Activated CD8-positive, alpha-beta T cell treated with anti-CD3 and anti-CD28 coated beads for 36 hours (primary cell): ENCODE measurements at regions of chr2 and their contacts with region 1.

Region 1: DNA sequence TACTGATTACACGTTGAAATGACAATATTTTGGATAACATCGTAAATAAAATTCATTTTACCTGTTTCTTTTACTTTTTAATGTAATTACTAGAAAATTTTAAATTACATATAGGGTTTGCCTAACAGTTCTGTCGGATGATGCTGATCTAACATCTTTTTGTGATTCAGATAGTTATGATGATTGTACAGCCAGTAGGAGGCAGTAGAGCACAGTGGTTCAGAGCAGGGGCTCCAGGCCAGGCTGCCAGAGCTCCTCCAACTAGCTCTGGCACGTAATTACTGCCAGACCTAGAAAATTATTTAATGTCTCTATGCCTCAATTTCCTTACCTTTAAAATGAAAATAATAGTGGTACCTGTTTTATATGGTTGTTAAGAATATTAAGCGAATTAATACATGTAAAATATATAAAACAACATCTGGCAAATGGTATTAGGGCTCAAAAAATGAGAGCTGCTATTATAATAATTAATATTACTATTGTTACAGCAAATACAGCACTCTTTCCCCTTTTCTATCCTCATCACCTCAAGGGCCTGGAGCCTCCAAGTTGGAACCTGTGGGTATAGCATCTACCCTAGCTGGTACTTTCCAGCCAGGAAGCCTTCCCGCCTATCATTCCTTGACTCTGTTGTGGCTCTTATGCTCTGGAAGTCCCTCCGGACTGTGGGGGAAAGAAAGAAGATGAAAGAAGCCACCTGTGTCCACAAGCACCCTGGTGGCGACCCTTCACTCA is 47.7 kb upstream of the PLA2R1 start:
- DNase-seq: peak; percentile 63
- ATAC-seq: peak; percentile 76
- H3K4me3 Mint-ChIP-seq: no peak overlapping the region
- H3K27ac Mint-ChIP-seq: no peak overlapping the region
- H3K4me1 Mint-ChIP-seq: no peaks in the 10 kb centered on the region
- H3K27me3 Mint-ChIP-seq: peaks cover 12% of the 10 kb centered on the region
- CTCF ChIP-seq: peak; percentile 87

Region 2: GRCh38 chr2:160091381-160091780 is 18.7 kb before region 1 on chr2:
- CTCF ChIA-PET with region 1: interaction called, 15 read pairs
- POLR2A ChIA-PET with region 1: no interaction called
- intact Hi-C with region 1: no loop called
- DNase-seq: no peak
- ATAC-seq: no peak
- H3K4me3 Mint-ChIP-seq: no peak overlapping the region
- H3K27ac Mint-ChIP-seq: no peak overlapping the region
- H3K4me1 Mint-ChIP-seq: peaks cover 2% of the 10 kb centered on the region
- H3K27me3 Mint-ChIP-seq: peaks cover 5% of the 10 kb centered on the region
- CTCF ChIP-seq: no peak

Region 3: GRCh38 chr2:160096409-160096808 is 13.7 kb before region 1 on chr2:
- CTCF ChIA-PET with region 1: interaction called, 15 read pairs
- POLR2A ChIA-PET with region 1: no interaction called
- intact Hi-C with region 1: no loop called
- DNase-seq: peak; percentile 58
- ATAC-seq: peak; percentile 78
- H3K4me3 Mint-ChIP-seq: no peak overlapping the region
- H3K27ac Mint-ChIP-seq: no peak overlapping the region
- H3K4me1 Mint-ChIP-seq: peaks cover 4% of the 10 kb centered on the region
- H3K27me3 Mint-ChIP-seq: peaks cover 5% of the 10 kb centered on the region
- CTCF ChIP-seq: no peak

Region 4: GRCh38 chr2:160210599-160211138 is 100.6 kb after region 1 on chr2:
- CTCF ChIA-PET with region 1: interaction called, 28 read pairs
- POLR2A ChIA-PET with region 1: no interaction called
- intact Hi-C with region 1: loop called (anchors 2 kb)
- DNase-seq: peak; percentile 82
- ATAC-seq: peak; percentile 86
- H3K4me3 Mint-ChIP-seq: no peak overlapping the region
- H3K27ac Mint-ChIP-seq: no peak overlapping the region
- H3K4me1 Mint-ChIP-seq: peaks cover 32% of the 10 kb centered on the region
- H3K27me3 Mint-ChIP-seq: peaks cover 5% of the 10 kb centered on the region
- CTCF ChIP-seq: peak; percentile 90

Region 5: DNA sequence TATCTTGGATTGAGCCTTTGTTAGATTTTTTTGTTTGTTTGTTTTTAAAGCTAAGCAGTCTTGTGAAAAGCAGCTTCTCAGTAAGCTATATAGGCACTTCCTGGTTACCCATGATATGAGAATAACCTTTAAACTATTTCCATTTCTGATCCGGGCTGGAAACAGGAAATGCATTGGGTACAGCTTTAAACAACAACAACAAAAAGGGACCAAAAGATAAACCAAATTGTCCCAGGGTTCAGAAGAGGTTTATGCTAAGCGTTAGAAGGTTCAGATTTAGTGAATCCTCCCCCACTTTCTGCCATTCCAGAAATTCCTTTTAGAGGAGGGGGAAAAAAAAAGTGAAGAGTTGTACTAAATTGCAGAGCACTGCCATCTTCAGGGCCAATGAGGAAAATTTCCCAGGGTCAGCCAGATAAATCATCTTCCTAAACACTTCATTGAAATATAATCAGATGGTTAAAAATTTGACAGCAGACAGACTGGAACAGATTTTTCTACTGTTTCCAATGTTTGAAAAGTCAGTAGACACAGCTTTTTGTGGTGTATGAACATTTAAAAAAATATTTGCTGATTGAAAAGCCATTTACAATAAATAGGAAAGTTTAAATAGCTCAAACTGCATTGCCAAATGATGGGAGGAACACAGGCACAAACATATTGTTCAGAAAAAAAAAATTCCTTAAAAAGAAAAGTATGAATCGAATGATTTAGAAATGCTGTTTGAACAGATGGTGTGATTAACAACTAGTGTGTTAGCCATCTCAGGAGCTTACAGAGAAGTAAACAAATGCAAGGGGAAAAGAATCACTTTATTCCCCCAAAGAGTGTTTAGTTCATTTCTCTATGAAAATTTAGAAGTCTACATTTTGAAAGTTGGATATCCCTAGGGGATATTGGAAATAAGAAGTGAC is 860.2 kb after region 1 on chr2:
- CTCF ChIA-PET with region 1: interaction called, 11 read pairs
- POLR2A ChIA-PET with region 1: no interaction called
- intact Hi-C with region 1: no loop called
- DNase-seq: peak; percentile 21
- ATAC-seq: no peak
- H3K4me3 Mint-ChIP-seq: no peak overlapping the region
- H3K27ac Mint-ChIP-seq: no peak overlapping the region
- H3K4me1 Mint-ChIP-seq: no peaks in the 10 kb centered on the region
- H3K27me3 Mint-ChIP-seq: peaks cover 1% of the 10 kb centered on the region
- CTCF ChIP-seq: peak; percentile 47